Activated CD4-positive, alpha-beta memory T cell treated with anti-CD3 and anti-CD28 coated beads, Interleukin-2, amount 10 ng/mL, durations not matched to agents 7 days and 5 days (primary cell): ENCODE measurements at regions of chr1 and their contacts with region 1.

Region 1: GRCh38 chr1:51897699-51898031 is 19.1 kb upstream of the NRDC start:
- DNase-seq: no peak
- H3K4me3 Mint-ChIP-seq: no peak overlapping the region
- H3K27ac Mint-ChIP-seq: no peak overlapping the region
- H3K4me1 Mint-ChIP-seq: peaks cover 2% of the 10 kb centered on the region
- H3K27me3 Mint-ChIP-seq: peaks cover 49% of the 10 kb centered on the region

Region 2: GRCh38 chr1:51926171-51926812 is 28.6 kb after region 1 on chr1:
- CTCF ChIA-PET with region 1: interaction called, 12 read pairs
- POLR2A ChIA-PET with region 1: no interaction called
- DNase-seq: no peak
- H3K4me3 Mint-ChIP-seq: no peak overlapping the region
- H3K27ac Mint-ChIP-seq: no peak overlapping the region
- H3K4me1 Mint-ChIP-seq: no peaks in the 10 kb centered on the region
- H3K27me3 Mint-ChIP-seq: peaks cover 14% of the 10 kb centered on the region

Region 3: DNA sequence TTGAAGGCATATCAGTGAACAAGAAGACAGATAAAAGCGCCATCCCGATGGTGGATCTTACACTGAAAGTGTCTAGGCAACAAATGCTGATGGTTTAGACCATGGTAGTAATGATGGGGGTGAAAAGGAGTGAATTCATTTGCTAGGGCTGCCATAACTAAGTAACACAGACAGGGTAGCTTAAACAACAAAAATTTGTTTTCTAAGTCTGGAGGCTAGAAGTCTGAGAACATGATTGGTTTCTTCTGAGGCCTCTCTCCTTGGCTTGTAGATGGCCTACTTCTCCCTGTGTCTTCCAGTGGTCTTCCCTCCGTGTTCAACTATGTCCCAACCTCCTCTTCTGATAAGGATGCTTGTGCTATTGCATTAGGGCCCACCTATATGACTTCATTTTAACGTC is 106.2 kb after region 1 on chr1:
- CTCF ChIA-PET with region 1: interaction called, 11 read pairs
- POLR2A ChIA-PET with region 1: no interaction called
- DNase-seq: no peak
- H3K4me3 Mint-ChIP-seq: no peak overlapping the region
- H3K27ac Mint-ChIP-seq: no peak overlapping the region
- H3K4me1 Mint-ChIP-seq: no peaks in the 10 kb centered on the region
- H3K27me3 Mint-ChIP-seq: peaks cover 27% of the 10 kb centered on the region

Region 4: GRCh38 chr1:52063192-52063591 is 165.5 kb after region 1 on chr1:
- CTCF ChIA-PET with region 1: no interaction called
- POLR2A ChIA-PET with region 1: no interaction called
- DNase-seq: no peak
- H3K4me3 Mint-ChIP-seq: no peak overlapping the region
- H3K27ac Mint-ChIP-seq: no peak overlapping the region
- H3K4me1 Mint-ChIP-seq: peaks cover 25% of the 10 kb centered on the region
- H3K27me3 Mint-ChIP-seq: no peaks in the 10 kb centered on the region